ENCODE measurements at regions of chr2 and their contacts with region 1.

Region 1: GRCh38 chr2:134411828-134412638 is 158.2 kb downstream of the MGAT5 start:
- DNase-seq: peak; percentile 83

Region 2: GRCh38 chr2:133886735-133887660 is 525.0 kb before region 1 on chr2:
- intact Hi-C with region 1: loop called (anchors 5 kb)
- DNase-seq: peak; percentile 83

Region 3: DNA sequence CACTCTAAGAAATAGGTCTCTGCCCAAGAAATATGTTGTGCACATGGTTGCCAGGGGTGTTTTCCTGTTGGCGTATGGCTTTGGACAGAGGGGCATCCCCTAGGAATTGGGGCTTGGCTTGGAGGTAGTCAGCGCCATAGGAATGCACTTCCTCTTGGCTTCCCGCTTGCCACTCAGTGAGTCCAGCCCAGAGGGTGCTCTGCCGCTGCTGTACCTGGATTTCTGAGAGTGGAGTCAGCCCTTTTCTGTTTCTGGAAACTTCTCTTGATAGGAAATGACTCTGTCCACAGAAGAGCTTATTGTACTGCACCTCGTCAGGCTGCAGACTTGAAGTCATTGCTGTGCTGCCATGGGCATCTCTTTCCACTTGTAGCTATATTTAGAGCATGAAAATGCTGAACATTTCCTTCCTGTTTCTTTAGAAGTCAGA is 274.8 kb before region 1 on chr2:
- intact Hi-C with region 1: loop called (anchors 5 kb)
- DNase-seq: peak; percentile 83

Region 4: DNA sequence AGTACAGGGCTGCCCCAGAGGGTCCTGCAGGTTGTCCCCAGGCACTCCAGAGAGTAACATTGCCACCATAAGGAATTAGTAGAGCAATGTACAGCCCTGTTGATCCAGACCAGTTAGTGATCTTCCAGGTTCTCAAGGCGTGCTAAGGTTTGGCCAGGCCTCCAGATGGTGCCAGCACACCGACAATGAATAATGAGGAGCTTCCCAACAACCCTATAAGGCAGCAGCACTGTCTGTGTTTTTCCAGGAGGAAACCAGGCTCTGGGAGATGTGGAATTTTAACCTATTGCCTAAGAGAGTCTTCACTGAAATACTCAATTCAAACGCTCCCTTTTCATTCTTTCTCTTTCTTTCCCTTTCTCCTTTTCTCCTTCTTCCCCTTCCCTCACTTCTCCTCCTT is 36.1 kb before region 1 on chr2:
- intact Hi-C with region 1: loop called (anchors 5 kb)
- DNase-seq: no peak

Measured in cardiac septum (tissue), 1 donor.